B cell (primary cell): ENCODE measurements at regions of chr4 and their contacts with region 1.

Region 1: DNA sequence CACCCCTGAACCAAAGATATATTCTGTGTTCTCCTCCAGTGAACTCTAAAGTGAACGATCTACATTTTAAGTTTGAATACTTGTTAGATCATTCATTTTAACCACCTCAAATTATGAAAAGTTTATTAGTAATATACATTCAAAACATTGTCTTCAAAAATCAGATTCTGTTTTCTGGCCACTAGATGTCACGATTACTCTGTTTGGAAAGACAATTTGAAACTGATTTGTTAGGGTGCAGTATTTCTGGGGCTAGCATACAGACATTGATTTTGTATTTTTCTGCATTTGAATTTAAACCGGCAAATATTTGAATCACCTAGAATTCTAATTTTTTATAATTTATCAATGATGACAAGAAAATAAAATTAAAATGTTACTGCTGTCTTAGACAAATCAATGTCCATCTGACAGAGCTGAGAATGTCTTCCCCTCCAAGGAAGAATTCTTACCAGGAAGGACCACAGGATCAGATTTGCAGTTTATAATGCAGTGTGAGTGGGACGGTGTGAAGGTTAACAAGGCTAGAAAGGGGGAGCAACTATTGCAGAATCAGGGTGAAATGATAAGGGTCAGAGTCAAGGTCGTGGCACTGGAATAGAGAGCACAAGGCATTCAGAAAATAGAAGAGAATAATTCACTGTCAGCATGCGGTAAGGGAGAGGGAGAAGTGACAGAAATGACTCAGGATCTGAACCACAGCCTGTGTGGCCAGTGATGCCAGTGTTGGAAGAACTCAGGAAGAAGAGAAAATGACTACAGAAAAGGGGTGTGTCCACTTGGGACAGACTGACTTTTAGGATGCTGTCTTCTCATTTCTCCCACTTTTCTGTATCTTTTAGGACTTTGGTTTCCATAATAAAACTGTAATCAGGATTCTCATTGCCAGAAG is 91.6 kb downstream of the ANXA10 start:
- DNase-seq: peak; percentile 12
- ATAC-seq: no peak
- H3K4me3 ChIP-seq: no peak overlapping the region
- H3K4me3 Mint-ChIP-seq: no peak overlapping the region
- H3K27ac ChIP-seq: no peak overlapping the region
- H3K27ac Mint-ChIP-seq: no peak overlapping the region
- H3K4me1 ChIP-seq: peaks cover 0 to 3% of the 10 kb centered on the region in 2 donors
- H3K4me1 Mint-ChIP-seq: peaks cover 6% of the 10 kb centered on the region
- H3K27me3 ChIP-seq: no peaks in the 10 kb centered on the region
- H3K27me3 Mint-ChIP-seq: no peaks in the 10 kb centered on the region
- CTCF ChIP-seq: peak; percentile 52

Region 2: DNA sequence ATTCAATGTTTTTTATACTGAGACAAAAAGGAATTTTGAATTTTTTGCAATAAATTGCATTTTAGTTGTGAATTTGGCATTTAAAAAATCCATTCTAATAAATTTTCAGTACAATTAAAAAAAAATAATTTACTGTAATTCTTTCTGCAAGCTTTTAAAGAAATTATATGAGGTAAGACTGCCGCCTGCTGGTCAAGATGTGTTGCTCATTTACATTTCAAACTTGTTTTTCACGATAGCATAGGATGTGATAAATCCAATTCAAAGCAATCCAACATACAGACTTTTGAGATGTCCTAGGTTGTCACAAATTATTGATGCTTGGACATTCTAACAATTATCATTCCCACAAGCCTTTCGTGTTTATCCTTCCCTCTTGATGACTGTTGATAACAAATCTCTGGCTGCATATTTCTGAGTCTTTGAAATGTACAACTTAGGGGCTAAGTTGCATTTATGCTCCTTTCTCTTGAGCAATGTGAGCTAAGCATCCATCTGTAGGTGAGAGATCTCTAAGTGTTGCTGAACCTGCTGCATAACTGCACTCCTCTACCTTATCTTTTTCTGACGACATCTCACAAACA is 1863.9 kb after region 1 on chr4:
- CTCF ChIA-PET with region 1: no interaction called
- POLR2A ChIA-PET with region 1: no interaction called
- intact Hi-C with region 1: loop called (anchors 5 kb)
- DNase-seq: peak; percentile 69
- ATAC-seq: no peak
- H3K4me3 ChIP-seq: no peak overlapping the region
- H3K4me3 Mint-ChIP-seq: no peak overlapping the region
- H3K27ac ChIP-seq: no peak overlapping the region
- H3K27ac Mint-ChIP-seq: no peak overlapping the region
- H3K4me1 ChIP-seq: no peaks in the 10 kb centered on the region
- H3K4me1 Mint-ChIP-seq: no peaks in the 10 kb centered on the region
- H3K27me3 ChIP-seq: peaks cover 0 to 3% (median 1%) of the 10 kb centered on the region in 4 experiments
- H3K27me3 Mint-ChIP-seq: peaks cover 3% of the 10 kb centered on the region
- CTCF ChIP-seq: peak; percentile 88